ENCODE measurements at regions of chr16 and their contacts with region 1.

Region 1: GRCh38 chr16:22007509-22008214 is at the start of gene MOSMO:
- DNase-seq: peak; percentile 73
- ATAC-seq: peak; percentile 96
- H3K4me3 Mint-ChIP-seq: peak within 1 kb of the TSS; percentile 85
- H3K27ac Mint-ChIP-seq: peak within 1 kb of the TSS; percentile 81
- H3K4me1 Mint-ChIP-seq: peaks cover 34% of the 10 kb centered on the region
- H3K27me3 Mint-ChIP-seq: no peaks in the 10 kb centered on the region
- total RNA-seq, gene MOSMO: 10.2 to 12.6 TPM

Region 2: GRCh38 chr16:21953541-21953902 is 54.1 kb before region 1 on chr16:
- CTCF ChIA-PET with region 1: no interaction called
- DNase-seq: no peak
- ATAC-seq: peak; percentile 24
- H3K4me3 Mint-ChIP-seq: peak overlapping the region; percentile 98
- H3K27ac Mint-ChIP-seq: peak overlapping the region; percentile 92
- H3K4me1 Mint-ChIP-seq: peaks cover 65% of the 10 kb centered on the region
- H3K27me3 Mint-ChIP-seq: no peaks in the 10 kb centered on the region

Region 3: DNA sequence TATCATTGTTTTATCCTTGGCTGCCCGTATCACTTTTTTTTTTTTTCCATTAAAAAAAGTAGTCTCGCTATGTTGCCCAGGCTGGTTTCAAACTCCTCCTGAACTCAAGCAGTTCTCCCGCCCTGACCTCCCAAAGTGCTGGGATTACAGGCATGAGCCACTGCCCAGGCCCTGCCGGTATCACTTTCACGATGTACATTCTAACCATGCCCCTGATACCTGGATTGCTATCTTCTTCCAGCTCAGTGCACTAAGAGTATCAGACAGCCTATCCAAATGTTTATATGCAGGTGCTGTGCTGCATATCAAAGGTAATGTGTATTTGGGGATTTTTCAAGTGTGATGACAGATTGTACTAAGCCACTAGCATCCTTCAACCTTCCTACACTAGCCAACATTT is 14.5 kb after region 1 on chr16:
- CTCF ChIA-PET with region 1: interaction called, 10 read pairs
- DNase-seq: no peak
- ATAC-seq: no peak
- H3K4me3 Mint-ChIP-seq: no peak overlapping the region
- H3K27ac Mint-ChIP-seq: no peak overlapping the region
- H3K4me1 Mint-ChIP-seq: peaks cover 10% of the 10 kb centered on the region
- H3K27me3 Mint-ChIP-seq: no peaks in the 10 kb centered on the region